AG04449 (cell line): ENCODE measurements at regions of chr11 and their contacts with region 1.

Region 1: DNA sequence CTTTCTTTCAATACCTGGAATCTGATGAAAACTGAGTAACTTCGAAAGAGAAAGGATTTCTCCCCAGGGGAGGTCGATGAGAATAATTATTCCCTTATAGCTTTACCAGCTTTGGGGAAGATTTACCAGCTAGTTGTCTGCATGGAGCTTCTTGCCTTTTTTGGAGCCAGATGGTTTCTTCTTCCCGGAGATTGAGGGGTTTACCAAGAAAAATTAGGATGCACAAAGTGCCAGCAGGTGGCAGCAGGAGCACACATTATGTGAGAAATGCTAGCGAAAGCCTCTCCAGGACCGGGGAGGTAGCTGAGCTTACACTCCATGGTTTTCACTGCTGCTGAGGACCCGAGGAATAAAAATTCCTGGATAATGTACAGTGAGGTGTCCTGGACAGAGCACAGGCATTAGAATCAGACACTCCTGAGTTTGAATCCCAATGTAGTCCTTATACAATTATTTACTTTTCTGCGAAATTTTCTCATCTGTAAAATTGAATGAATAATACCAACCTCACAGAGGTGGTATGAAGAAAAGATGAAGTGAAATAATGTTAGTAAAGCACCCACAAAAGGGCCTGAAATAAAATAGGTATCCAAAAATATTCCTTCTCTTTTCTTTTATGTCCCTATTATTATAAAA is 46.0 kb upstream of the PARVA start:
- DNase-seq: peak; percentile 38
- H3K4me3 ChIP-seq: no peak overlapping the region
- CTCF ChIP-seq: peak; percentile 59

Region 2: GRCh38 chr11:12269104-12269441 is 62.3 kb before region 1 on chr11:
- CTCF ChIA-PET with region 1: no interaction called
- POLR2A ChIA-PET with region 1: no interaction called
- DNase-seq: no peak
- H3K4me3 ChIP-seq: no peak overlapping the region
- CTCF ChIP-seq: no peak

Region 3: GRCh38 chr11:12377824-12378593 is 46.7 kb after region 1 on chr11:
- CTCF ChIA-PET with region 1: interaction called, 10 read pairs
- POLR2A ChIA-PET with region 1: interaction called, 4 read pairs
- DNase-seq: peak; percentile 17
- H3K4me3 ChIP-seq: peak overlapping the region; percentile 79
- CTCF ChIP-seq: no peak

Region 4: DNA sequence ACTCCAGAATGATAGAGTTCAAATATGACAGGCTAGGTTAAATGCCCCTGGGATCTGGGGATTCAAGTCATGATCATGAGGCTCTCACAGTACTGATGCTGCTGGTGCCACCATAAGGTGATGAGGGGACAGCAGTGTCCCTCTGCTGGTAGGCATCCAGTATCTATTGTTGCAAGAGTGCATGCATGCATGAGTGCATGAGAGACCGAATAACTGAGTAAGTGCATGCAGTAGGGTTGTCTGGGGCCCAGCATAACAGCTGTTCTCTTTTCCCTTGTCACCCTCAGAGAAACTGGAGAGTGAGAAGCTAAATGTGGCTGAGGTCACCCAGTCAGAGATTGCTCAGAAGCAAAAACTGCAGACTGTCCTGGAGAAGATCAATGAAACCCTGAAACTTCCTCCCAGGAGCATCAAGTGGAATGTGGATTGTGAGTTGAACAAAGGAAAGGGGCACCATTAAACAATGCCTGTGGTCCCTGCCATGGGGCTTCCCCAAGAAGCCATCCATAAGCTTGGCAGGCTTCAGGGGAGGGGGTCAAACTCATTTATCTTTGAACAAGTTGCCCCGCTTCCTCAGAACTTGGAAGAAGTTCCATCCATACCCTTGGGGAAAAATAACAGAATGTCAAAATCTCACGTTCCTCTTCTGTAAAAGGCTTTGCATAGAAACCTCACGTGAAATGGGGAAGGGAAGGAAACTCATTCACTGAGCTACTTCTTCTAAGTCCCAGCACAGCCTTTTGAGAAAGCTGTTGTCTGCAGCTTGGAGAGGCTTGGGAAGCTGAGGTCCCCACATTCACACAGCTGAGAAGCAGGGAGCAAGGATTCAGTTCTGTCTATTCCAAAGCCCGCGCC is 165.0 kb after region 1 on chr11:
- CTCF ChIA-PET with region 1: interaction called, 18 read pairs
- POLR2A ChIA-PET with region 1: no interaction called
- DNase-seq: no peak
- H3K4me3 ChIP-seq: no peak overlapping the region
- CTCF ChIP-seq: peak; percentile 16

Region 5: GRCh38 chr11:12680246-12680939 is 349.0 kb after region 1 on chr11:
- CTCF ChIA-PET with region 1: interaction called, 15 read pairs
- POLR2A ChIA-PET with region 1: no interaction called
- DNase-seq: peak; percentile 60
- H3K4me3 ChIP-seq: peak overlapping the region; percentile 31
- CTCF ChIP-seq: no peak

Region 6: DNA sequence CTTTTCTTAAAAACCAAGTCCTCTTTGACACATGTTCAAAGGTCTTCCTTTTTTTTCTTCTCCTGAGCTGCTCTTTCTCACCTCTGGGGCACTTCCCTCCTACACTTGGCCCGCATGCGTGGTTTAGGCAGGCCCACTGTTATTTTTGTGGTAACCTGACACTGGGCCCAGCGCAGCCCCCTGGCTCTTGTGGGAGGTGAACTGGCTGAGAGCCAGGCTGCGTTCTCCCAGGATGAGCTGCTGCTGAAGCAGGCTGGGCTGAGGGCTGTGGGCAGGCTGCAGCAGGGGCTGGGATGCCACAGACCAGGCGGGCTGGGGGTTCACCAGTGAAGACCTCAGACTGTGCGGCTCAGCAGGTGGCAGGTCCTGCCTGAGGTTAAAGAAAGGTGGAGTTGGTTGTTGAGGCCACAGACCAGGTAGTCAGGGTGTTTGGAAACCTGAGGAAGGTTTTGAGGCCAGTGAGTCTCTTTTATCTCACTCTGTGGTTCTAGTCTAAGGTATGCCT is 415.3 kb after region 1 on chr11:
- CTCF ChIA-PET with region 1: no interaction called
- POLR2A ChIA-PET with region 1: no interaction called
- DNase-seq: no peak
- H3K4me3 ChIP-seq: no peak overlapping the region
- CTCF ChIP-seq: no peak

Region 7: GRCh38 chr11:12900496-12900895 is 569.1 kb after region 1 on chr11:
- CTCF ChIA-PET with region 1: interaction called, 34 read pairs
- POLR2A ChIA-PET with region 1: no interaction called
- DNase-seq: peak; percentile 89
- H3K4me3 ChIP-seq: no peak overlapping the region
- CTCF ChIP-seq: no peak